ENCODE measurements at regions of chr5 and their contacts with region 1.

Region 1: GRCh38 chr5:82351754-82352145 is 73.6 kb upstream of the RPS23 start:
- DNase-seq: no peak
- H3K4me3 ChIP-seq: no peak overlapping the region
- H3K27ac ChIP-seq: no peak overlapping the region
- H3K4me1 ChIP-seq: peaks cover 0 to 11% of the 10 kb centered on the region in 2 donors
- H3K27me3 ChIP-seq: no peaks in the 10 kb centered on the region
- CTCF ChIP-seq: peak; percentile 59 to 91 (median 80)
- POLR2A ChIP-seq: no peak

Region 2: GRCh38 chr5:81838307-81838906 is 513.3 kb before region 1 on chr5:
- intact Hi-C with region 1: no loop called
- DNase-seq: peak; percentile 19 to 22
- H3K4me3 ChIP-seq: no peak overlapping the region
- H3K27ac ChIP-seq: no peak overlapping the region
- H3K4me1 ChIP-seq: peaks cover 3 to 4% of the 10 kb centered on the region in 2 donors
- H3K27me3 ChIP-seq: no peaks in the 10 kb centered on the region
- CTCF ChIP-seq: peak in 5 of 6 experiments; percentile 18 to 53 (median 44)
- POLR2A ChIP-seq: no peak

Region 3: DNA sequence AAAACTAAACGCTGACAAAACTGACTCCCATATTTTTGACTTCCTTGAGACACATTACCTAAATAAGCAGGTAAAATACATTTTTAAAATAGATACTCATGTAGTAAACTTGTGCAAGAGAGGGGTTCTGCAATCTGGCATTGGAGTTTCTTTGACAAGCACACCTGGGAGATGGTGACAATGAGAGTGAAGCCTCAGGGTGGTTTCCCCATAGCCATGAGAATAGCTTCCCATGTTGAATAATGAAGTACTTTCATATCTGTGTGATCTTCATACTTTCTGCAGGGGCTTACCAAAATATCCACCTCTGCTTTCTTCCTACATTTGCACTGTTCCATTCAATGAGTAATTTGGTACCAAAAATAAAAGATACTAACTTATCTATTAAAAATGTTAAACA is 1075.1 kb after region 1 on chr5:
- intact Hi-C with region 1: loop called (anchors 10 kb)
- DNase-seq: no peak
- H3K4me3 ChIP-seq: no peak overlapping the region
- H3K27ac ChIP-seq: no peak overlapping the region
- H3K4me1 ChIP-seq: no peaks in the 10 kb centered on the region
- H3K27me3 ChIP-seq: no peaks in the 10 kb centered on the region
- CTCF ChIP-seq: no peak
- POLR2A ChIP-seq: no peak

Region 4: DNA sequence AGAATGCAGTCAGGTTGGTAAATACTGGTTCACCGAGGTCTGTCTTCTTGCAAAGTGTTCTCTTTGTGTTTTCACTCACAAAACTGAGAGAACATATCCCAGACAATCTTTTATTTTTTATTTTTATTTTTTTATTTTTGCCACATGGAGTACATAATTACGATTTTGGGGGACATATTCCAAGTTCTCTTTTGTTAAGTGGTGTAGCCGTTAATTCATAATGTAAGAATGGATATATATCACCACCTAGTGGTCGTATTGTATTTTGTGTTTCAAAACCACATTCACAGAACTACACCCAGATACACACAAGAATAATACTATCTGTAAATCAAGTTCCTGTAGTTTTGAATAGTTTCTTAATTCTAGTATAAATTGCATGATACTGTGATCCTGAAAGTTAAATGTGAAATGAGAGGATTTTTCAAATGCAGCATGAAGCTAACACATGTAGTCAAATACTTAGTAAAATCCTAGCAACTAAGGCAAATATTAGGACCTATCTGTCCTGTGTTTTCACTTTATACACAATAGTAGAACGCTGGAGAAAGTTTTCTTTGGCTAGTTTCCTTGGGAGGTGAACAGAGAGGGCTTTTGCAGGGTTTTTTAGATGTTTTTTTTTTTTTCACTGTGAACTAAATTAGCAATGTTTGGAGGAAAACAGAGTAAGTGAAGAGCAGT is 1212.5 kb after region 1 on chr5:
- intact Hi-C with region 1: loop called (anchors 10 kb)
- DNase-seq: no peak
- H3K4me3 ChIP-seq: no peak overlapping the region
- H3K27ac ChIP-seq: no peak overlapping the region
- H3K4me1 ChIP-seq: peaks cover 0 to 8% of the 10 kb centered on the region in 2 donors
- H3K27me3 ChIP-seq: no peaks in the 10 kb centered on the region
- CTCF ChIP-seq: peak; percentile 6 to 74 (median 62)
- POLR2A ChIP-seq: no peak

Measured in thyroid gland (tissue), 4 donors.